ENCODE measurements at regions of chr15 and their contacts with region 1.

Region 1: DNA sequence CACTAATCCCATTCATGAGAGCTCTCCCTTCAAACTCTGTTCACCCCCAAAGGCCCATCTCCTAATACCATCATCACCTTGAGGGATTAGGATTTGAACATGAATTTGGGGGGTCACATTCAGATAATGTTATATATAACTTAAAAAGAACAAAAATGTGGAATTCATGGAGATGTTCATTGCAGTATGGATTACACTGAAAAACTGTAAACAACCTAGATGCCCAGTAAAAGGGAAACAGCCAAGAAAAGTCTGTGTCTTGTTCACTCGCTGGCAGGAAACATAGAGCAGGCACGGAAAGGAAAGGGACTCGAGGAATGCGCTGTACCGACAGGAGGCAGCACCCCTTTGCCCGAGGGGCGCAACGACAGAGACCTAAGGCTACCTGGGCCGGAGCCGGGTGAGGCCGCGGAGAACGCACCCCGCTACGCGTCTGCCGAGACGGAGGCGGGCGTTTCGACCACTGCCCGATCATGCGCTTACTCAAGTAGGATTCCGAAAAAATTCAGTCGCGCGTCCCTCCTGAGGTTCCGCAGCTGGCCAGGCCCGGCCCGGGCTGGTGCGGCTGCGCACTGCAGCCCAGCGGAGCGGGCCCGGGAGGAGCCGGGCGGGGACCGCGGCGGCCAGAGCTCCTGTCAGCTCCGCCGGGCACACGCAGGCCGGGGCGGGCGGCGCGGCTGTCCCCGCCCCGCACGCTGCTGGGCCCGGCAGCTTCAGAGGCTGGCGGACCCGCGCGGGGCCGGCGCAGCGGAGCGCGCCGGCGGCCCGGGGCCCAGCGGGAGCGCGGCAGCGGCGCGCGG is 862 bp upstream of the MAN2A2 start:
- DNase-seq: peak; percentile 56 to 82 (median 66)
- ATAC-seq: peak; percentile 70 to 79
- H3K4me3 Mint-ChIP-seq: peak overlapping the region; percentile 81 to 91 (median 86)
- H3K27ac Mint-ChIP-seq: peak overlapping the region; percentile 83 to 97 (median 91)
- H3K4me1 Mint-ChIP-seq: peaks cover 19 to 32% (median 27%) of the 10 kb centered on the region in 4 donors
- H3K27me3 Mint-ChIP-seq: no peaks in the 10 kb centered on the region

Region 2: DNA sequence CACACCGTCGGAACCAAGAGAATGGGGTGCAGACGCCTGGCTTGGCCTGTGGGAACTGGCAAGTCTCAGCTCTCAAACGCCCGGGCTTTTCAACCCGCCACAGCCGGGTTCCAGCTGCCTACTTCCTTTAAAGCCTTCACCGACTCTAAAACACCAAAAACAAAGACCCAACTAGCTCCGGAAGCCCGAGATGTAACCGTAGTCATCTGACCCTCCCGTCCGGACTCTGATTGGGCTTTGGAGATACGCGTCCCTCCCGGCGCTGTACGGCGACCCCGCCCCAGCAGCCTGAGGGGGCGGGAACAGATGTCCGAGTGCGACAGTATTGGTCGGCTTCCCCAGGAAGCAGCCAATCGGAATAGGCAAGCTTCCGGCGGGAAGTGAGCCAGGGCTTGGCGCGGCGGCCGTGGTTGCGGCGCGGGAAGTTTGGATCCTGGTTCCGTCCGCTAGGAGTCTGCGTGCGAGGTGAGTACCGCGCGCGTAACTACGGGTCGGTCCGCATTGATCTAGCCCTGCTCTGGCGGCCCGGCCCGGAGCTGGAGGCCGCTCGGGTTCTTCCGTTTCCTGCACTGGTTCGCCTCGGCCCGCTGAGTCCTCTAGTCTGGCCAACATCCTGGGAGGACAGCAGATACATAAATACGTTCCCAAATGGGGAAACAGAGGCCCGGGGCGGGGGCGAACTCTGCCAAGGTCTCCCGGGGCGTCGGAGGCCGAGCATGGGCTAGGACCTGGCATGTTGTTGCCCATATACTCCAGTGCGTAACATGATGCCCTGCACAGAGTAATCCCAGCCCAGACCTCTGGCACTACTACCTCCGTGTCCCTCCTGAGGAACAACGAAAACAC is 185.0 kb before region 1 on chr15 and contains the start of gene BLM:
- POLR2A ChIA-PET with region 1: interaction called, 11 read pairs
- DNase-seq: peak; percentile 87 to 97 (median 94)
- ATAC-seq: peak; percentile 99
- H3K4me3 Mint-ChIP-seq: peak within 1 kb of the TSS; percentile 95 to 98 (median 96)
- H3K27ac Mint-ChIP-seq: peak within 1 kb of the TSS; percentile 91 to 98 (median 94)
- H3K4me1 Mint-ChIP-seq: peaks cover 14 to 30% (median 28%) of the 10 kb centered on the region in 4 donors
- H3K27me3 Mint-ChIP-seq: no peaks in the 10 kb centered on the region
- polyA plus RNA-seq, gene BLM: 2.6 to 4.1 (median 4.1) TPM

Region 3: DNA sequence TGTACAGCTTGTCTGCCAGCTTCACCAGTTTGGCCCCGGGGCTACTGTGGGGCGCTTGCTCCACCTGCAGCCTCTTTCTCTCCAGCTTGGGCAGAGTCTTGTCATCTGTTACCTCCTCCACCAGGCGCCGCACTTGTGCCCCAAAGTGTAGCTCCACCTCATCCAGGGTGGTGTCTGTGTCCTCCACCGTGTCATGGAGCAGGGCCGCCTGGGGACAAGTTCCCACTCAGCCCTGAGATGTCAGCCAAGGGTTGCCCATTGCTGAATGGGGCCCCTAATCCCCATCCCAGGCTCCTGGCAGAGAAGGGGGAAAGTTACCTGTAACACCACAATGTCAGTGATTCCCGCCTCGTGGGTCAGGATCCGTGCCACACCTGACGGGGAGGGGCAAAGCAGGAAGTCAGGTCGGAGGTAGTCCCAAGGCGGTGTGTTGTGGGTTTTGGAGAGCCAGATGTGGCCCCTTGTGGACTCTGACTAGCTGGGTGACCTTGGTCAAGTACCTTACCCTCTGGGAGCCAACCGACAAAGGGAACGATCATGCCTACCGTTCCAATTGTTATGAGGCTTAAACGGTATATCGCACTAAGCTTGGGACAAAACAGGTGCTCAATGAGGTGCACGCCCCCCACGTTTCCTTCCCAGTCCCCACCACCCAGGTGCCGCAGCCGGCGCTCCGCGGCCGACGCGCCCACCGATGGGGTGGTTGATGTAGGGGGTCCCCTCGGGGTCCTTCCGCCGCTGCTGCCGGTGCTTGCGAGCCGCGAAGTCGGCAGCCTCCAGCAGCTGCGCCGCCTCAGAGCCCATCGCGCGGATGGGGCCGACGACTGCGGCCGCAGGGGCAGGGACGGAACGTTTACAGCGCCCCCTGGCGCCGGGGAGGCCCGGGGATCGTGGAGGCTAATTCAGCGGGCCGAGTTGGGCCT is 29.8 kb after region 1 on chr15 and contains the start of gene HDDC3:
- POLR2A ChIA-PET with region 1: interaction called, 237 read pairs
- DNase-seq: peak; percentile 78 to 93 (median 87)
- ATAC-seq: peak; percentile 59 to 60
- H3K4me3 Mint-ChIP-seq: peak within 1 kb of the TSS; percentile 96 to 99 (median 98)
- H3K27ac Mint-ChIP-seq: peak within 1 kb of the TSS; percentile 94 to 100 (median 98)
- H3K4me1 Mint-ChIP-seq: peaks cover 26 to 60% (median 53%) of the 10 kb centered on the region in 4 donors
- H3K27me3 Mint-ChIP-seq: no peaks in the 10 kb centered on the region
- polyA plus RNA-seq, gene HDDC3: 34.1 to 47.6 (median 45.5) TPM

Region 4: DNA sequence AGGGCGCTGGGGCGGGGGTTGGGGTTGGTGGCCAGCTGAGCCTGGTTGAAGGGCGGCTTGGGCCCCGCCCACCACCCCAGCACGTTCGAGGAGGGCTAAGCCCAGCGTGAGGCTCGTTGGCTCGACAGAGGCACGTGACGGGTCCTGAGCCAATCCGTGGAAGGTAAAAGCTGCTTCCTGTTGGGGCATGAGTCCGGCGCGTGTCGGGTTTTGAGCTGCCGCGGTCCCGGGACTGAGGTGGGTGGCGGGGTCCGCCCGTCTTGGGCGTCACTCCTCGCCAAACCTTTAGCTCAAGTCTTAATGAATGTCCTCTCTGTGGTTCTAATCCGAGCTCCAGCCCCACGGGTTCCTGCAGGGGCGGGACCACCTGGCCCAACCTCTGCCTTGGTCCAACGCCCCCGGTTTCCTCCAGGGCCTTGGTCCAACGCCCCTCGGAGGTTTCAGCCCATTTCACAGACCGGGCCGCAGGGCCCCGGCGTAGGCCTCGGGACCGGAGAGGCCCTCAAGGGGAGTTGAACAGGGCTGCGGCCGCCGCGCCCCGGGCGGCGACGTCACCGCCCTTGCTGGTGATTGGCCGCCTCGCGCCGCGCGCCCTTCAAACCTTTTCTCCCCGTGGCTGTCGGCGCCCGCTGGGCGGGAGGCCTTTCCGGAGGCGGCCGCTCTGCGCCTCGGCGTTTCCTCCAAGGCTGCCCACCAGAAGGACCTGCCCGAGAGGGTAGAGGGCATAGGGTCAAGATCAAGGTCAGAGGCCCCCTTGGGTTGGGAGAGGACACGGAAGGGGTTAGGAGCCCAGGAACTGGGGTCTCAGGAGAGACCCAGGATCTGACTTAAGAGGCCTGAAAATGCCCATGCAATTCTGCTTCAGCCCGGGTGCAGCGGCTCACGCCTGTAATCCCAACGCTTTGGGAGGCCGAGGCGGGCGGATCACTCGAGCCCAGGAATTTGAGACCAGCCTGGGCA is 52.8 kb after region 1 on chr15 and contains the start of gene RCCD1:
- POLR2A ChIA-PET with region 1: interaction called, 13 read pairs
- DNase-seq: peak; percentile 75 to 94 (median 82)
- ATAC-seq: peak; percentile 97 to 98
- H3K4me3 Mint-ChIP-seq: peak within 1 kb of the TSS; percentile 82 to 90 (median 88)
- H3K27ac Mint-ChIP-seq: peak within 1 kb of the TSS; percentile 68 to 97 (median 93)
- H3K4me1 Mint-ChIP-seq: peaks cover 4 to 23% (median 12%) of the 10 kb centered on the region in 4 donors
- H3K27me3 Mint-ChIP-seq: no peaks in the 10 kb centered on the region
- polyA plus RNA-seq, gene RCCD1: 2.2 to 4.7 (median 3.1) TPM

Measured in naive thymus-derived CD8-positive, alpha-beta T cell (primary cell).